Vagina (tissue), 2 donors: ENCODE measurements at regions of chr6 and their contacts with region 1.

Region 1: DNA sequence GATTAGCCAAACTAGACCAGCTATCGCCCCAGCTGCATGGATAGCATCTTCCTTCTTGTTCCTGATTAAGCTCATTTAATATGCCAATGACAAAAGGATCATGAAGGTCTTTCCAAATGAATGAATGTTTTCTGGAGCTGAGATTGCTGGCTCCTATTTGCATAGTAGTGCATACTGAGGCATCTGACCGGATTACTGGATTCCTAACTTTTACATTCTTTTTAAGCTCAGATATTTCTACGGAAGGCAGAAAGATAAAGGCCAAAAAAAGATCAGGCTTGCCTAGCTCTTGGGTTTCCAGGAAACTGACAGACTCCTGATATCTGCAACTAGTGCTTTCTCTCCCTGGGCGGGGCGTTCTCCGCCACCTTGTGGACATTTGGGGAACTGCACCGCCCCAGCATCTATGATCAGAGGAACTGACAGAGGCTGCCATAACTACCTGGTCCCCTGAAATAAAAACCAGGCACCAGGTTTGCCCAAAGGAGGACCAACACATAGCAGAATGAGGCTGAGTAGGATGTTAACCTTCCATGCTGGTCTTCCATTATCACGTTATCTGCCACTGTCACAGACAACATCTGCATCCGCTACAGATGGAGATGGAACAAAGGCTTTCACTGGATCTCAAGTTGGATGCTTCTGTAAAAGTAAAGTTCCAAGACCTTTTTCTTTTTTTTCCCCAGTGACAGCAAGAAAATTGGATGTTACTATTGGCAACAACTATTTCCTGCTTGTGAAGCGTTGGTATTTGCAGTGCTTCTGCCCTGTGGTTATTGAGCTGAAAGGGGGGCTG is 33.2 kb downstream of the NT5E start:
- DNase-seq: no peak
- H3K4me3 ChIP-seq: no peak overlapping the region
- H3K27ac ChIP-seq: peak overlapping the region; percentile 58
- H3K4me1 ChIP-seq: peaks cover 11% of the 10 kb centered on the region
- H3K27me3 ChIP-seq: no peaks in the 10 kb centered on the region
- CTCF ChIP-seq: peak; percentile 96 to 99 (median 98)
- POLR2A ChIP-seq: no peak

Region 2: DNA sequence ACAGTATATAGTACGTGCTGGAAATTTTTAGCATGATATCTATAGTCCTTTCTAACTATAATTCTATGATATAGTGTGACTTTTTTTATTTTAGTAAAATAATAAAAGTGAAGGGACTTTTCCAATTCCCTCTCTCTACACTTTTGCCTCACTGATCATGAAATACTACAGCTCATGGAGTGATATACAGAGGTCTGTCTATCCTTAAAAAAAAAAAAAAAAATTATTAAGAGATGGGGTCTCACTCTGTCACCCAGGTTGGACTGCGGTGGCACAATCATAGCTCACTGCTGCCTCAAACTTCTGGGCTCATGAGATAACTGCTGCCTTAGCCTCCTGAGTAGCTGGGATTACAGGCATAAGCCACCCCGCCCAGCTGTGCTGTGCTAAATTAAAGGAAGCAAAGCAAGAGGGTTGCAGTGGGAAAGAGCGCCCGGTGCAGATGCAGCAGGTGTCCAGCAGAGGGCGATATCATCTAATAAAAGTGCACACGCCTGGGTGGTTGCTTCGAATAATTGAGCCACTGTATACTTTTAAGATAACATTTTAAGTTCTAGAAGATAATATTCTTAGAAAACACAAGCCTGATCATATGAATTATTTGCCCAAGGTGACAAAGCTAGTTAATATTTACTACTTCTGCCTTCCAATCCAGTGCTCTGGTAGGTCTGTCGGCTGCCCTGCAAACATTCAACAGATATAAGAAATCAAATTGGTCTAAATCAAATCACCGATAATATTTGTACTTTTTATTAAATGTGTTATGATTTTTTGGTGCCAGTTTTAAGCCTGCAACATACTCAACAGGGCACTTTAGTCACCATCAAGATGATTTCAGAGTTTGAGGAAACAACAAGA is 128.1 kb before region 1 on chr6:
- intact Hi-C with region 1: loop called (anchors 2 kb)
- DNase-seq: no peak
- H3K4me3 ChIP-seq: no peak overlapping the region
- H3K27ac ChIP-seq: no peak overlapping the region
- H3K4me1 ChIP-seq: no peaks in the 10 kb centered on the region
- H3K27me3 ChIP-seq: no peaks in the 10 kb centered on the region
- CTCF ChIP-seq: peak; percentile 87 to 96 (median 96)
- POLR2A ChIP-seq: no peak